ENCODE measurements at regions of chr1 and their contacts with region 1.

Region 1: GRCh38 chr1:232630047-232630893 is at the start of gene SIPA1L2:
- DNase-seq: peak; percentile 92 to 99 (median 94)

Region 2: DNA sequence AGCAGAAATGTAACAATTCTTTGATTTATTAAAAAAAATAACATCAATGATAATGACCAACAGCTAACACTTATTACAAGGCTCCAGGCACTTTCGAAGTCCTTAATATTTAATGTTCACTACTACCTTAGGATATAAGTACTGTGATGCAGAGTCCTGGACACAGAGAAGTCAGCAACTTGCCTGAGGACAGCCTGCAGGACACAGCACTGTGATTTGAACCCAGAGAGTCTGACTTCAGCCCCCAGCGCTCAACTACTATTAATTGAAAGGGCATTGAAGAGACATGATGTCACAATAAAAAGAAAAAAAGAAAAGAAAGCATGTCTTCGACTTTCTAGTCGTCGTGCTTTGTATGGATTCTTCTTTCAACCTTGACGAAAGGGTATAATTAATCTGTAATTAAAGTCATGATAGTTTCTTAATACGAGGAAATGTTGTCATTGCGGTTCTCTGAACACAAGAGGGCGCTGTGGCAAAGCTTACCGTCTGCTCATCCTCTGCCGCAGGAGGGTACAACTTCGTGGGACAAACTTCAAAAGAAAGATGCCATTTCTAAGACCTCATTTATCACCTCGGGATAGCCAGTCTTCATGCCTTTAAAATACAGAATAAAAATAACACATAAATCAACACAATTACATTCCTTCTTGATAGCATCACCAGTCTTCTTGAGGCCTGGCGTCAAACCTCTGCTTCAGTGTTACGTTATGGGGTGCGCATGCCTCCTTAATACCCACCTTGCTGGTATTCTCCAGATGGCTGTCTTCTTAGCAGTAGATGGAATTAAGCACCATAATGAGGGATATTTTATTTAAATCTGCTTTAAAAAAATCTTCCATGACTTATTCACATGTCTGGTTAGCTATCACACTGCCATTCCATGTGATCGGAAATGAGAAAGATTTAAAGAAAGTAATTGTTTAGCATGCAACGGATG is 763.6 kb before region 1 on chr1:
- intact Hi-C with region 1: loop called (anchors 2 kb)
- DNase-seq: peak in 8 of 10 donors; percentile 42 to 93 (median 68)

Region 3: DNA sequence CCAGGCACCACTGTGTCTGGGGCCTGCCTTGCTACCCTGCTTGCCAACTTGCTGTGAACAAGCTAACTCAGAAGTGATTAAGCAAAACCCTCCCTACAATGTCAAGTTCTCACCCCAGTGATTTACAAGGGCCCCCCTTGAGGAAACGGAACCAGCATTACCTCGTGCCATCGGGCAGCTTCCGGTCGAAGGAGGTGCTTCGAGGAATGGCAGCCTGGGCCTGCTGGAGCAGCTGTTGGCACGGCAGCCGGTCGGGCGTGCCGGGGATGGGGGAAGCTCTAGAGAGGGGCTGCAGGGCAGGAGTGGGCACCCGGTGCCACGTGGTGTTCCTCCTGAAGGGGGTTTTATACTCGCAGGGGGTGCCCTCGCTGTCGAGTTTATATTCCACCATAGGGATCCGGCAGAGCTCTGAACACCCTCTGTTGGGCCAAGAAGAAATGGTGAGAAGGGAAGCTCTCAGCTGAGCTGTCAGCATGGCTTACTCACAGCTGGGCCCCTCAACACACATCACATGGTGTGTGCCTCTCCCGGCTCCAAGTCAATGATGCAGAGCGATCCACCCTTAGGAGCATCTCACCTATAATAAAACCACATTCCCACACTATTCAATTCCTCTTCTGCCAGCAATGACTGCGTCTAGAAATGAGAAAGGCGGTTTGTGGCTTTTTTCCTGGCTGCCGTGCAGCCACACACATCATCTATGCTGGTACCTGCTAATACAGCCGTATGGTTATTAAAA is 184.7 kb before region 1 on chr1:
- intact Hi-C with region 1: no loop called
- DNase-seq: peak in 1 of 10 donors; percentile 73

Region 4: DNA sequence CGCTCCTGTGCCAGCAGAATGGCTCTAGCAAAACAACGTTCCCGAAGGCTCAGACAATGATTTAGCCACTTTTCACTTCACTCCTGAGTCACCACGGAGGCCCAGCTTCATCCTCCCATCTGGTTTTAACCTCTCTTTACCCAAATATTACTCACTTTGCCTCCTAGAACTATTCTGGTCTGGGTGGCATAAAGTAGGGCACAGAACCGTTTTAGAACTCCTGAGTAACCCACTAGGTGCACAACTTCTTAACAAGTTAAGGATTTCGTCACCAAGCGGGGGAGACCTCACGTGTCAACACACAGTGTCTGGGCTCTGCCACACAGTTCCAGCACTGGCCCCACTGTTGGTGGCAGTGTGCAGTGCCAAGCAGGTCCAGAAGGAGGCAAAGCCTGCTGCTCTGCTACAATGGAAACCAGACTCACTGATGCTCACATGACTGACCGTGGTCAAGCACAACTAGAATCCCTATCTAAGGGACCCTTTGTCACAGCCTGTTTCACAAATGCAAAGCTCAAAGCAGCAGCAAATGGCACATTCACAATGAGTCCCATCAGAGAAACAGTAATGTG is 122.1 kb before region 1 on chr1:
- intact Hi-C with region 1: loop called (anchors 1 kb)
- DNase-seq: peak; percentile 43 to 95 (median 69)

Region 5: DNA sequence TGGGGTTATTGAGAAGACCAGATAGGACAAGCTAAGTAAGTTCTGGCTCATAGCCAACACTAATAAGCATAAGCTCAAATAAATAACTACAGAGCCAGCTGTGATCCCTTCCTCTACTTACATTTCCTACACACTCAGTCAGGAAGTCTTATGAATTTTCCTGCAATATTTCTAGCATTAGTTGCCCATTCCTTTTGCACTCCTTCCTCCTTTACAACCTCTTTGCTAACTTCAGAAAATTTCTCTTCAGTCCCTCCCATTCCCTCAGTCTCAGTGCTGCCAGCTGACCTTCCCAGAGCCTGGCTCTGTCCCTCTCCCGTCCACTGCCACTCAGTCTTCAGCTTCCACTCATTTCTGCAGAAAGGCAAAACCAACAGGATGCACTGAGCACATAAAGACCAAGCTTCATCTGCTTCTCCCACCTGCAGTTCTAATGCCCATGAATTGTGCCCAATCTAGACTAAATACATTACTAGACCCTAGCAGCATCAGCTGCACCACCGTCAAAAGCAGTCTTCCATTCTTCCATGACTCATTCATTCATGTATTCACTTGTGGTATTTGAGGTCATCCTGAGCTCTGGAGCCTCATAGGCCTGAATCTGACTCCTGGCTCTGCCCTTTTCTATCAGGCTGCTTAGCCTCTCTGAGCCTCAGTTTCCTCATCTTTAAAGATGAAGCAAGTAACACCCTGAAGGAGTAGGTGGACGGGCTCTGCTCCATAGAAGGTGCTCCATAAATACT is 54.3 kb after region 1 on chr1:
- intact Hi-C with region 1: no loop called
- DNase-seq: no peak

Region 6: DNA sequence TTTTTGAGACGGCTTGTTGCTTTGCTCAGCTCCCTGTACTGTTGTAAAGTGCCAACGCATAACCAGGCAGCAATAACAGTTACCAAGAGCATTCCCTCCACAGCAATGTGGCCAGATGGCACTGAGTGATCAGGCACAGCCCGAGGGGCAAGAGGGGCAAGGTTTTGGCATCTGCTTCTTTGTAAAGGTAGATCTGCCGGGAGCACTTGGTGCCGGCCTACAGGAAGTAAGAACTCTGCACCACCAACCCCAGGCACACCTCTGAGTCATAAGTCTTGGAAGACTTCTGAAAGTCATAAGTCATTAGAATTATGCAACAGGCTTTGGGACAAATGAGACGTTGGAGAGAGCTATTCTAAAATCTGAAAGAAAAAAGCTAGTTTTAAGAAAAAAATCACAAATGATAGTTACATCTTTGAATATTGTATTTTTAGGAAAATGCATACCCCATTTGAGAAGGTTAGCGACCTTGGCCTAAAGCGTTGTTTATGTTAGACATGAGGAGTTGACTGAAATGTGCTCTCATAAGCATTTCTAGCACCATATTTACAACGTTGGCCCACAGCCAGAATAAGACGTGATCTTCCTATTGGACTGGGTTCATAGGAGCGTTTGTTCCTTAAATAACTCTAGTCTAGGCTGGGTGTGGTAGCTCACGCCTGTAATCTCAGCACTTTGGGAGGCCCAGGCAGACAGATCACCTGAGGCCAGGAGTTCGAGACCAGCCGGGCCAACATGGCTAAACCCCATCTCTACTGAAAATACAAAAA is 137.2 kb after region 1 on chr1:
- intact Hi-C with region 1: no loop called
- DNase-seq: no peak

Region 7: DNA sequence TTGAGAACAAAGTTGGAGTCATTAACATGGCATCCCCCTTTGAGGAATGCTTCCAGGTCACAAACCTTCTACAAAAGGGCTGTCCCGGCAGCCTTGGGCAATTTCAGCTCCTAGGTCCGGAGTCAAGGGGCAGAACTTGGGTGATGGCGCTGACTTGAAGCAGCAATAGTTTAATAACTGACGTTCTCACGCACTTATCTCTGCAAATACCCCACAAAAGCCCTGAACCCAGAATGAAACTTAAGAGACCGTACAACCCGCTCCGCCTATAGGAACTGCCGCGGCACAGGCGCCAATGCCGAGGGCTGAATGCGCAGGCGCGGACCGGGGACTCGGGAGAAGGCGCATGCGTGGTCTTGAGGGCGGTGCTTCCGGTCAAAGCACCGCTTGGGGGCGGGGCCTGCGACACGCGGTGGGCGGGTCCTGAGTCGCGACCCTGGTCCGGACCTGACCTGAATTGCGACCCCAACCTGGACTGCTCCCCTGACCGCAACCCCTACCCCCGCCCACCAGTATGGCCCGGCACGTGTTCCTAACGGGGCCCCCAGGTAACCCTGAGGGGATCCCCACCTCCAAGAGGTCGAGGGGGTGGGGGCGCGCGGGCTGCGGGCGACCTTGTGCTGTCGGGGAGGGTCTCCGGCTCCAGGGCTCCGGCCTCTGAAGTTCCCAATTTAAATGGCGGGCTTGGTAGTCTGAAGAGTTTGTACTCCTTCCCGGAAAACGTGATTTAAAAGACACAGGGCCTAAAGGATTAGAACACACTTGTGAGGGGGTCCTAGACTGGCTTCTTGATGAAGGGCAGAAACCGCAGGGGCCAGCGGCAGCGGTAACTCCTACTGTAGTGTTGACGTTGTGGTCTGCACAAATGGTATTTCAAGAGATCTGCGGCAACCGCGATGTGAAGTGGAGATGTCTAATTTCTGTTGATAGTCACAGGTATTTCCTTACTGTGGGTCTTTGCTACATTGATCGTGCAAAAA is 320.2 kb after region 1 on chr1 and contains the start of gene NTPCR:
- intact Hi-C with region 1: loop called (anchors 2 kb)
- DNase-seq: peak; percentile 84 to 98 (median 90)

Region 8: GRCh38 chr1:233025157-233025915 is 395.1 kb after region 1 on chr1:
- intact Hi-C with region 1: loop called (anchors 10 kb)
- DNase-seq: peak in 5 of 10 donors; percentile 37 to 90 (median 41)